Esophagus squamous epithelium (tissue), 5 donors: ENCODE measurements at regions of chr14 and their contacts with region 1.

Region 1: GRCh38 chr14:29553427-29553826 is 374.2 kb downstream of the PRKD1 start:
- DNase-seq: no peak
- H3K4me3 ChIP-seq: no peak overlapping the region
- H3K27ac ChIP-seq: no peak overlapping the region
- H3K4me1 ChIP-seq: no peaks in the 10 kb centered on the region
- H3K27me3 ChIP-seq: no peaks in the 10 kb centered on the region
- CTCF ChIP-seq: no peak
- POLR2A ChIP-seq: no peak

Region 2: GRCh38 chr14:30002859-30003258 is 449.4 kb after region 1 on chr14:
- intact Hi-C with region 1: loop called (anchors 5 kb)
- DNase-seq: no peak
- H3K4me3 ChIP-seq: no peak overlapping the region
- H3K27ac ChIP-seq: no peak overlapping the region
- H3K4me1 ChIP-seq: no peaks in the 10 kb centered on the region
- H3K27me3 ChIP-seq: no peaks in the 10 kb centered on the region
- CTCF ChIP-seq: no peak
- POLR2A ChIP-seq: no peak